Natural killer cell (primary cell): ENCODE measurements at regions of chr19 and their contacts with region 1.

Region 1: GRCh38 chr19:5803752-5804515 is 933 bp upstream of the NRTN start:
- DNase-seq: peak; percentile 85 to 96
- ATAC-seq: peak; percentile 92 to 95 (median 94)
- H3K4me3 ChIP-seq: no peak overlapping the region
- H3K4me3 Mint-ChIP-seq: peak overlapping the region; percentile 78
- H3K27ac ChIP-seq: no peak overlapping the region
- H3K27ac Mint-ChIP-seq: peak overlapping the region; percentile 74 to 91
- H3K4me1 ChIP-seq: peaks cover 27% of the 10 kb centered on the region
- H3K4me1 Mint-ChIP-seq: peaks cover 12 to 19% of the 10 kb centered on the region in 2 donors
- H3K27me3 ChIP-seq: peaks cover 39% of the 10 kb centered on the region
- H3K27me3 Mint-ChIP-seq: peaks cover 7 to 50% of the 10 kb centered on the region in 2 donors
- CTCF ChIP-seq: peak; percentile 87

Region 2: GRCh38 chr19:5470264-5470671 is 333.7 kb before region 1 on chr19:
- intact Hi-C with region 1: no loop called
- DNase-seq: no peak
- ATAC-seq: no peak
- H3K4me3 ChIP-seq: no peak overlapping the region
- H3K4me3 Mint-ChIP-seq: no peak overlapping the region
- H3K27ac ChIP-seq: no peak overlapping the region
- H3K27ac Mint-ChIP-seq: no peak overlapping the region
- H3K4me1 ChIP-seq: no peaks in the 10 kb centered on the region
- H3K4me1 Mint-ChIP-seq: no peaks in the 10 kb centered on the region
- H3K27me3 ChIP-seq: no peaks in the 10 kb centered on the region
- H3K27me3 Mint-ChIP-seq: peaks cover 0 to 10% of the 10 kb centered on the region in 2 donors
- CTCF ChIP-seq: no peak

Region 3: DNA sequence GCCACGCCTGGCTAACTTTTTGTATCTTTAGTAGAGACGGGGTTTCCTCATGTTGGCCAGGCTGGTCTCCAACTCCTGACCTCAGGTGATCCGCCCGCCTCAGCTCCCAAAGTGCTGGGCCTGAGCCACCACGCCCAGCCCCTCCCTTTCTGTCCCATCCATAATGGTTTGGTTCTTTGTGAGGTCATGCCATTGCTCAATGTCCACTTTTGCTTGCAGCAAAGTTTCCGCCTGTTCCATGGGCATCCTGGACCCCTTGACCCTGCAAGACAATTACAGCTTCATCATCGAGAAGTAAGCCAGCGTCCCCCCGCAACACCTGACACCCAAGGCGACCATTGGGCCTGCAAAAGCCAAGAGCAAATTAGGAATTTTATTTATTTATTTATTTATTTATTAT is 36.0 kb before region 1 on chr19:
- intact Hi-C with region 1: no loop called
- DNase-seq: no peak
- ATAC-seq: no peak
- H3K4me3 ChIP-seq: no peak overlapping the region
- H3K4me3 Mint-ChIP-seq: no peak overlapping the region
- H3K27ac ChIP-seq: no peak overlapping the region
- H3K27ac Mint-ChIP-seq: no peak overlapping the region
- H3K4me1 ChIP-seq: no peaks in the 10 kb centered on the region
- H3K4me1 Mint-ChIP-seq: no peaks in the 10 kb centered on the region
- H3K27me3 ChIP-seq: no peaks in the 10 kb centered on the region
- H3K27me3 Mint-ChIP-seq: no peaks in the 10 kb centered on the region
- CTCF ChIP-seq: no peak

Region 4: GRCh38 chr19:5891938-5892771 is 88.2 kb after region 1 on chr19:
- intact Hi-C with region 1: loop called (anchors 2 kb)
- DNase-seq: peak in 1 of 2 donors; percentile 39
- ATAC-seq: peak; percentile 23 to 76 (median 67)
- H3K4me3 ChIP-seq: no peak overlapping the region
- H3K4me3 Mint-ChIP-seq: no peak overlapping the region
- H3K27ac ChIP-seq: no peak overlapping the region
- H3K27ac Mint-ChIP-seq: peak overlapping the region in 1 of 2 donors; percentile 58
- H3K4me1 ChIP-seq: no peaks in the 10 kb centered on the region
- H3K4me1 Mint-ChIP-seq: peaks cover 0 to 7% of the 10 kb centered on the region in 2 donors
- H3K27me3 ChIP-seq: no peaks in the 10 kb centered on the region
- H3K27me3 Mint-ChIP-seq: peaks cover 0 to 3% of the 10 kb centered on the region in 2 donors
- CTCF ChIP-seq: peak; percentile 52

Region 5: GRCh38 chr19:5926641-5927440 is 122.9 kb after region 1 on chr19:
- intact Hi-C with region 1: no loop called
- DNase-seq: no peak
- ATAC-seq: no peak
- H3K4me3 ChIP-seq: no peak overlapping the region
- H3K4me3 Mint-ChIP-seq: no peak overlapping the region
- H3K27ac ChIP-seq: no peak overlapping the region
- H3K27ac Mint-ChIP-seq: no peak overlapping the region
- H3K4me1 ChIP-seq: no peaks in the 10 kb centered on the region
- H3K4me1 Mint-ChIP-seq: no peaks in the 10 kb centered on the region
- H3K27me3 ChIP-seq: no peaks in the 10 kb centered on the region
- H3K27me3 Mint-ChIP-seq: no peaks in the 10 kb centered on the region
- CTCF ChIP-seq: no peak

Region 6: DNA sequence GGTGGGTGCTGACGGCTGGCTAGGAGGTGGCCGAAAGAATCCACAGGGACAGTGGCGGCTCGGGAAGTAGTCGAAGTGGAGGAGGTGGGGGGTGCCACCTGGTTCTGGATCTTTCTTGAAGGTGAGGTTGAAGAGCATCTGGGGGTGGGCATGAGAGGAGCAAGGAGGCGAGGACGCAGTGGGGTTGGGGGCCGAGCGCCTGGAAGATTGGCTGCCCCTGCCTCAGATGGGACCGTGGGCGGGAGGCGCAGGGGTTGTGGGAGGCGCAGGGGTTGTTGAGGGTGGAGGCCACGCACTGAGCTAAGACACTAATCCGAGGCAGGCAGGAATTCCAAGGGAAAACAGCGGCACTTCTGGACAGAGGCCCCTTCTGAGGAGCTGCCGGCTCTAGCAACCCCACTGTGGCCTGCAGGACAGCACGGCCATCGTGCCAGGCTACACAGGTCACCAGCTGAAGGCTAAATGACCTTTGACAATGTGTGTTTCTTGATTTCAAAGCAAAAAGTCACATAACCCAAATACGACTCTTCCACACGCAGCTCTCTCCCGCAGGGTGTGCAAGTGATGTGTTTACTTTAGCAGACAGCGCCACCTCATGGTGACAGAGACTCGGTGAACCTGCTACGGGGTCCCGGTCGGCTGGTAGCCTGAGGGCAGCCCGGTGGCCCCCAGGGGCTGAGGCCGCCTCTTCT is 218.1 kb after region 1 on chr19:
- intact Hi-C with region 1: loop called (anchors 5 kb)
- DNase-seq: peak; percentile 58 to 90
- ATAC-seq: peak; percentile 74 to 89 (median 89)
- H3K4me3 ChIP-seq: no peak overlapping the region
- H3K4me3 Mint-ChIP-seq: no peak overlapping the region
- H3K27ac ChIP-seq: no peak overlapping the region
- H3K27ac Mint-ChIP-seq: no peak overlapping the region
- H3K4me1 ChIP-seq: no peaks in the 10 kb centered on the region
- H3K4me1 Mint-ChIP-seq: no peaks in the 10 kb centered on the region
- H3K27me3 ChIP-seq: no peaks in the 10 kb centered on the region
- H3K27me3 Mint-ChIP-seq: peaks cover 0 to 3% of the 10 kb centered on the region in 2 donors
- CTCF ChIP-seq: peak; percentile 51